Left cardiac atrium (tissue), 4 donors: ENCODE measurements at regions of chr21 and their contacts with region 1.

Region 1: DNA sequence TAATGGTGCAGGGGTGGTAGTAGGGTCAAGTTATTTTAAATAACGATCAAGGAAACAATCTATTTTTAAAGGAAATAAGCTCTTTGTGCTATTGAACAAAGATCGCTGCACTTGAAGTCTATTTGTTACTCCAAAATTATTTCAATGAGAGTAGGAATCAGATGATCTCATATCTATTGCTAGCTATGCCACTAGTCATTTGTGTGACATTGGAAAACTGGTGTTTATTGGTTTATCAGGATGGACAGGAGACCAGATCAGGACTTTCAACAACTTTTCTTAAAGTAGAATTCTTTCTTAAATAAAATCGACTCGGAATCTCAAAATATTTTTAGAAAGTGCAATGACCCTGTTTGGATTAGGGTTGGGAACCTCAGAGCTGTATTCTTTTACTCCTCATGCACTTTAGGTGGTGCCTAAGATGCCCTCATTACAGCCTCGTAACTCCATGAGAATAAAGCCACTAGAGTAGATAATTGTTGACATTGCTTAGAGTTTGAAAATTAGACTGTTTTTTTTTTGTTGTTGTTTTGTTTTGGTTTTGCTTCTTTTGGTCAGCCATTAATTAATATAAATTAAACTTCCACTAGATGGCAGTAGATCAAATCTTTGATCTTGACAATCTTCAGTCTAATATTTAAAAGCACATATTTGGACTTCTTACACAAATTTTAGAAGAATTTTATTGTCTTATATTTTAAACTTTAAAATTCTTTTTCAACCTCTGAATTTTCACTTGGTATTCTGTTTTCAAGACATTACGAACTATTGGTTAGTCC is 352.4 kb downstream of the USP25 start:
- DNase-seq: no peak
- ATAC-seq: no peak

Region 2: DNA sequence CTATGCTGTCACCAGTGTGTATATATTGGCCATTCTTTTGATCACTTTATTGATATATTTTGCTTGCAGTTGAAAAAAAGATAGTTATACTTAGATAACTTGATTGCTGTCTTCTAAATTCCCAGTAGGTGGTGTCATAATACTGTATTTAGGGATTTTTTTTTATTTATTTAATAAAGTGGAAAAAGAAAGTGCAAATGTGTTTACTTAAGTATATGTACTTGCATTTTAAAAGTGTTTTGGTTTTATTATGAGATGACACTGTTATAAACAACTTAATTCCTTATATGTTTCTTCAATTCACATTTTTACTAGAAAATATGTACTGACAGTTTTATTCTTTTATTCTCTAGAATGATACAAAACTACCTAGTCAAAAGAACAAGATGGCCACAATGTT is 187.6 kb before region 1 on chr21:
- intact Hi-C with region 1: no loop called
- DNase-seq: no peak
- ATAC-seq: no peak

Region 3: GRCh38 chr21:16124378-16125130 is 42.3 kb after region 1 on chr21:
- intact Hi-C with region 1: no loop called
- DNase-seq: no peak
- ATAC-seq: peak in 1 of 2 donors; percentile 64

Region 4: GRCh38 chr21:16194095-16194787 is 112.0 kb after region 1 on chr21:
- intact Hi-C with region 1: loop called in 1 of 2 experiments (anchors 10 kb)
- DNase-seq: peak; percentile 61
- ATAC-seq: peak; percentile 83 to 88

Region 5: DNA sequence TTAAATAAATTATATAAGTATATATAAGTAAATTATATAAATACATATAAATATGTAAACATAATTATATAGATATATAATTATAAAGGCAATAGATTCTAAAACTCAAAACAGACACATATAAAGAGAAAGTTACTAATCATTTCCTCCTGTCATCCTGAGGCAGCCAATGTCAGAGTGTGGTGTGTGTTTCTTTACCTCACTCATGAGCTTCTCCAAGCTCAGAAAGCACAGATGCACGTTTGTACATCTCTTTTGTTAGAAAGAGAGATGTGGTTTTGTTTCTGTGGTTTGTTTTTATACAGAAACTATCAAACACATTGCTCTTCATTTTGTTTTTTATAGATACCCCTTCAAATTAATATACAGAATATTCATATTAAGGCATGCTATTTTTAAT is 242.4 kb after region 1 on chr21:
- intact Hi-C with region 1: loop called in 1 of 2 experiments (anchors 5 kb)
- DNase-seq: no peak
- ATAC-seq: no peak

Region 6: GRCh38 chr21:16330082-16330907 is 248.1 kb after region 1 on chr21:
- intact Hi-C with region 1: loop called (anchors 2 to 5 kb)
- DNase-seq: no peak
- ATAC-seq: peak; percentile 96 to 98

Region 7: DNA sequence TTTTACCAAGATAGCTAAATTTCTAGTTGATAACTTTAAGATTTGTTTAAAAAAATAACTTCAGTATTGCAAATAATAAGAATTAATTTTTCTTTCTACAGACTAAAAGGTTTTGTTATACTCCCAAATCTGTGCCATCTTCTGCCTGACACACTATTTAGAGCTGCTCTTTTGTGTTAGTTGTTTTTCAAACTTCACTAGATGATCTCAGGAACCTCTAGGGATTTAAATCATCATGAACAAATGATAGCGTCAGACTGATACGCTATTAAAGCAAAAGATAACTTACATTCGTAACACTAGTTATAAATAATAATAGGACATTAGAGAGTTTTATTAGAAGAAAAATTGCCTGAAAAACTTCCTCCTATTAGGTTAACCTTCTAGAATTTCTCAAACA is 1187.5 kb after region 1 on chr21:
- intact Hi-C with region 1: loop called in 1 of 2 experiments (anchors 10 kb)
- DNase-seq: no peak
- ATAC-seq: no peak